Heart left ventricle (tissue), 16 donors: ENCODE measurements at regions of chr6 and their contacts with region 1.

Region 1: GRCh38 chr6:21609881-21610329 is 16.4 kb downstream of the SOX4 start:
- DNase-seq: no peak
- ATAC-seq: no peak
- H3K4me3 ChIP-seq: no peak overlapping the region
- H3K27ac ChIP-seq: no peak overlapping the region
- H3K4me1 ChIP-seq: no peaks in the 10 kb centered on the region
- H3K27me3 ChIP-seq: no peaks in the 10 kb centered on the region
- CTCF ChIP-seq: no peak
- POLR2A ChIP-seq: no peak

Region 2: DNA sequence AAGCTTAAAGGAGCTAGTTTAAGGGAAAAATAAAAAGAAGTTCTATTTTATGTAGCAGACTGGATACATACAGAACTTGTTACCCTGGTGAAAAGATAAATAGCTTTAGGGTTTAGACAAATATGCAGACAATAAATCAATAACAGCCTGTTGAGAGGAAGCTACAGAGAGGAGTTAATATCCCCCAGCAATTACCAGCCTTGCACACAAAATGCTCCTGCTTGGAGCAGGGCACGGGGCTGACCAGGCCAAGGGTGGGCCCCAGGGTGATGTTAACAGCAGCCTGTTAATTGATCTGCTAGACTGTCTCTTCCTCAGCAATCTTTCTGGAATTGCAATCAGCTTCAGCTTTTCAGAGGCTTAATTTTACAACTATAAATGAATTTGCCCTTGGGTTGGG is 141.4 kb before region 1 on chr6:
- intact Hi-C with region 1: no loop called
- DNase-seq: no peak
- ATAC-seq: no peak
- H3K4me3 ChIP-seq: no peak overlapping the region
- H3K27ac ChIP-seq: no peak overlapping the region
- H3K4me1 ChIP-seq: no peaks in the 10 kb centered on the region
- H3K27me3 ChIP-seq: no peaks in the 10 kb centered on the region
- CTCF ChIP-seq: no peak
- POLR2A ChIP-seq: no peak

Region 3: DNA sequence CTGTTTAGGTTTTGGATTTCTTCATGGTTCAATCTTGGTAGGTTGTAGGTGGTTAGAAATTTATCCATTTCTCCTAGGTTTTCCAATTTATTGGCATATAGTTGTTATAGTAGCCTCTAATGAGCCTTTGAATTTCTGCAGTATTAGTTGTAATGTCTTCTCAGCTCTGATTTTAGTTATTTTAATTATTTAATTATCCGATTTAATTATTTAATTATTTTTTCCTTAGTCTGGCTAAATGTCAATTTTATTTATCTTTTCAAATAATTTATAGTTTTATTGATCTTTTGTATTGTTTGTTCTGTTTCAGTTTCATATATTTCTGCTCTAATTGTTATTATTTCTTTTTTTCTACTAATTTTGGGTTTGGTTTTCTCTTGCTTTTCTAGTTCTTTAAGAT is 44.5 kb before region 1 on chr6:
- intact Hi-C with region 1: no loop called
- DNase-seq: no peak
- ATAC-seq: no peak
- H3K4me3 ChIP-seq: no peak overlapping the region
- H3K27ac ChIP-seq: no peak overlapping the region
- H3K4me1 ChIP-seq: no peaks in the 10 kb centered on the region
- H3K27me3 ChIP-seq: no peaks in the 10 kb centered on the region
- CTCF ChIP-seq: no peak
- POLR2A ChIP-seq: no peak

Region 4: GRCh38 chr6:21928827-21929226 is 318.9 kb after region 1 on chr6:
- intact Hi-C with region 1: loop called in 1 of 10 experiments (anchors 5 kb)
- DNase-seq: no peak
- ATAC-seq: no peak
- H3K4me3 ChIP-seq: no peak overlapping the region
- H3K27ac ChIP-seq: no peak overlapping the region
- H3K4me1 ChIP-seq: peaks cover 0 to 12% (median 0%) of the 10 kb centered on the region in 12 donors
- H3K27me3 ChIP-seq: no peaks in the 10 kb centered on the region
- CTCF ChIP-seq: no peak
- POLR2A ChIP-seq: no peak